ENCODE measurements at regions of chr9 and their contacts with region 1.

Region 1: DNA sequence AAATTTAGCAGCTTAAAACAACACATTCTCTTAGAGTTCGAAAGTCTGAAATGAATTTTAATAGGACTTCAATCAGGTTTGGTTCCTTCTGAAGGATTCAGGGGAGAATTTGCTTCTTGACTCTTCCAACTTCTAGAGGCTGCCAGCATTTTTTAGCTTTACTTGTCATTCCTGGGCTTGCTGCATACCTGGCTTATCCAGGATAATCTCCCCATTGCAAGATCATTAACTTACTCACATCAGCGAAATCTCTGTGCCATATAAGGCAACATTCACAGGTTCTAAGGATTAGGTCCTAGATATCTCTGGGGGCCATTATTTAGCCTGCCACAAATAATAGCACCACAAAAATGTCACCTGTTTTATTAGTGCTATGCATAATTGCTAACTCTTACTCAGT is 46.2 kb upstream of the PCSK5 start:
- DNase-seq: no peak
- H3K4me3 ChIP-seq: no peak overlapping the region
- H3K27ac ChIP-seq: no peak overlapping the region
- H3K4me1 ChIP-seq: no peaks in the 10 kb centered on the region
- H3K27me3 ChIP-seq: no peaks in the 10 kb centered on the region
- CTCF ChIP-seq: no peak

Region 2: DNA sequence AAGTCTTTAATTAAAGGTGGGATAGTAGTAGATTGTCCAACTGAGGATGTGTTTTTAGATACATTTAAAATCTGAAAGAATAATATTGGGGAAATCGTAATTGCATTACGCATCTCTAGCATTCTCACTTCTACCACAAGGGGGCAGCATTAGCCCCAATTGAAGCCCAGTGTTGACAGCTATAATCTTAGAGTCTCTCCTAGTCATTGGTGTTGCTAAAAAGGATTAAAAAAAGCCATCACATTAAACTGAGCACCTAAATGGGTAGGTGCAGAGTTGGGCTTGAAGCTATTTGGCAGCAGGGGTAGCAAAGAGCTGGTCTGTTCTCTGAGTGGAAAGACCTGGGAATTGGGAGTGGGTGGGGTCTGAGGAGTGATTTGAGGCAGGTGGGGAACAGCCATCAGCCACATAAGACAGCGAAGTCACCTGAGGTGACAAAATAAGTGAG is 578.8 kb before region 1 on chr9:
- intact Hi-C with region 1: loop called (anchors 10 kb)
- DNase-seq: peak in 3 of 5 donors; percentile 43 to 81 (median 60)
- H3K4me3 ChIP-seq: no peak overlapping the region
- H3K27ac ChIP-seq: no peak overlapping the region
- H3K4me1 ChIP-seq: no peaks in the 10 kb centered on the region
- H3K27me3 ChIP-seq: no peaks in the 10 kb centered on the region
- CTCF ChIP-seq: peak; percentile 75